ENCODE measurements at regions of chr12 and their contacts with region 1.

Region 1: GRCh38 chr12:69015841-69016240 is 82.9 kb upstream of the CPM start:
- DNase-seq: no peak

Region 2: DNA sequence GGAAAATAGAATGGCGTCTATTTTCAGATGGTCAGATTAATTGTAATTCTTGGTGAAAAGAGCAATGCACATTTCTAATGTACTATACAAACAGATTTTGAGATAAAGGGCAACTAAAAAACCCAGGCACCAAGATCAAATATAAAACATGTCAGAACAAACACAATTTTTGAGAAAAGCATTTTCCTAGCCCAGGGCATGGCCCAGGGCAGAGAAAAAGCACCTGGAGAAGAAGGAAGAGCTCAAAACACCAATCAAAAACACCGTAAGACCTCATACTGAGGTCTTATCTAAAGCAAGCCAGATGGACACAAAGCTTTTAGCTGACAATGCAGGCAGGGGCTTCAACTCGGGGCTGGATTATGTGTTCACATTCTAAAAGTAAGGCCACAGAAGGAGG is 1001.0 kb before region 1 on chr12:
- intact Hi-C with region 1: loop called in 1 of 2 experiments (anchors 5 kb)
- DNase-seq: no peak

Region 3: GRCh38 chr12:69405466-69405865 is 389.6 kb after region 1 on chr12:
- intact Hi-C with region 1: no loop called
- DNase-seq: peak; percentile 83